CD14-positive monocyte (primary cell): ENCODE measurements at regions of chr2 and their contacts with region 1.

Region 1: GRCh38 chr2:69816923-69817542 is 12.4 kb upstream of the GMCL1 start:
- DNase-seq: peak; percentile 74 to 89 (median 86)
- H3K4me3 ChIP-seq: no peak overlapping the region
- H3K4me3 Mint-ChIP-seq: no peak overlapping the region
- H3K27ac ChIP-seq: no peak overlapping the region
- H3K27ac Mint-ChIP-seq: no peak overlapping the region
- H3K4me1 ChIP-seq: peaks cover 0 to 6% of the 10 kb centered on the region in 2 donors
- H3K4me1 Mint-ChIP-seq: peaks cover 4% of the 10 kb centered on the region
- H3K27me3 ChIP-seq: no peaks in the 10 kb centered on the region
- H3K27me3 Mint-ChIP-seq: peaks cover 0 to 3% (median 0%) of the 10 kb centered on the region in 3 donors
- CTCF ChIP-seq: peak; percentile 96

Region 2: GRCh38 chr2:69724540-69725159 is 92.4 kb before region 1 on chr2:
- intact Hi-C with region 1: loop called (anchors 2 kb)
- DNase-seq: peak; percentile 69 to 77 (median 76)
- H3K4me3 ChIP-seq: peak overlapping the region in 2 of 3 experiments; percentile 4 to 46
- H3K4me3 Mint-ChIP-seq: peak overlapping the region; percentile 67 to 84
- H3K27ac ChIP-seq: no peak overlapping the region
- H3K27ac Mint-ChIP-seq: peak overlapping the region in 1 of 7 donors; percentile 45
- H3K4me1 ChIP-seq: peaks cover 3% of the 10 kb centered on the region in 2 donors
- H3K4me1 Mint-ChIP-seq: peaks cover 6% of the 10 kb centered on the region
- H3K27me3 ChIP-seq: no peaks in the 10 kb centered on the region
- H3K27me3 Mint-ChIP-seq: peaks cover 0 to 6% (median 3%) of the 10 kb centered on the region in 3 donors
- CTCF ChIP-seq: peak; percentile 91

Region 3: GRCh38 chr2:69830047-69830905 is 13.2 kb after region 1 on chr2:
- intact Hi-C with region 1: no loop called
- DNase-seq: peak; percentile 27 to 54 (median 46)
- H3K4me3 ChIP-seq: peak overlapping the region; percentile 67 to 88 (median 70)
- H3K4me3 Mint-ChIP-seq: peak overlapping the region; percentile 87 to 95
- H3K27ac ChIP-seq: peak overlapping the region in 1 of 2 donors; percentile 98
- H3K27ac Mint-ChIP-seq: peak overlapping the region in 6 of 7 donors; percentile 24 to 89 (median 58)
- H3K4me1 ChIP-seq: peaks cover 22 to 31% of the 10 kb centered on the region in 2 donors
- H3K4me1 Mint-ChIP-seq: peaks cover 32% of the 10 kb centered on the region
- H3K27me3 ChIP-seq: no peaks in the 10 kb centered on the region
- H3K27me3 Mint-ChIP-seq: no peaks in the 10 kb centered on the region
- CTCF ChIP-seq: no peak